ENCODE measurements at regions of chr14 and their contacts with region 1.

Region 1: DNA sequence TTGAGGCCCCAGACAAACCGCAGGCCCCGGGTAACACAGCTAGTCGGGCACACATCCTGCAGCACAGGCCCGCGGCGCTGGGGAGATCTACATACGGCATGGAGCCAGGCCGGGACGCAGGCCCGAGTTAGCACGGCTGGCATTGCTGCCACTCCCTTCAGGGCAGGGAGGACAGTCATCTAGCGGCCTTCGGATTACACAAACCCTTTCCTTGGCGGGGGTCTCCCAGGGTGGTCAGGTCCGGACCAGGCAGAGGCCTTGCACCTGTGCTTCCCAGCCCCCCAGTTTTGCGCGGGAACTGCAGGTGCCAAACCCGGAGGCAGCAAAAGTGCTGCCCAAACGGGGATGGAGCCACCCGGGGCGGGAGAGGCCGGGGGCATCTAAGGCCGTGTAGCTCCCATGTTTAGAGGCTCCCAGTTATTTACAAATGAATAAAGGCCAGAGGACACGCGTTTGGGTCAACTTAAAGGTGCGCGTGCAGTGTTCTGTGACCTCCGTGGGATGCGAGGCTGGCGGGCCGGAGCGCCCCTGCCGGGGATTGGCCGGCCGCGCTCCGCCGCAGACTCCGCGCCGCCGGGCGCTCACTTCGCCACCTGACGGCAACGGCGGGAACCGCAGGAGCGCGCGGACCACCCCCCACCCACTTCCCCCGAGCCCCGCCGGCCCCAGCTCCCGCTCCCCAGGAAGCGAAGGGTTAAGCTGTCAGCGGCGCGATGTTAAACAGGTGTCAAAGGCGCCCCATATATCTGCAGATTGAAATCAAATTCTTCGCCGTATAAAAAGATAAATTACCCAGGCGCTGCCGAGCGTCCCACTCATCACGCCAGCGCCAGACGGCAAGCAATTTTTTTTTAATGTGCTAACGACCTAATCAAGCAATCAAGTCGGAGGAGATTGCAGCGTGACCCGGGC is 18.1 kb downstream of the VSX2 start:
- DNase-seq: no peak
- H3K4me3 ChIP-seq: peak overlapping the region; percentile 37
- H3K27me3 ChIP-seq: peaks cover 21% of the 10 kb centered on the region
- CTCF ChIP-seq: peak; percentile 60

Region 2: DNA sequence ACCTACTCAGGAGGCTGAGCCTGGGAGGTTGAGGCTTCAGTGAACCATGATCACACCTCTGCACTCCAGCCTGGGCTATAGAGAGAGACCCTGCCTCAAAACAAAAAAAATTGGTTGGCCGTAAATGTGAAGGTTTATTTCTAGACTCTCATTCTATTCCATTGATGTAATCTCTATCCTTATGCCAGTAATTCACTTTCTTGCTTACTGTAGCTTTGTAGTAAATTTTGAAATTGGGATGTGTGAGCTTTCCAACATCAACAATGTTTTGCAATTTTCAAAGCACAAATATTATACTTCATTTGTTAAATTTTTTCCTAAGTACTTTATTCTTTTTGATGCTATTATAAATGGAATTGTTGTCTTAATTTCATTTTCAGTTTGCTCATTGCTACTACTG is 148.0 kb before region 1 on chr14:
- CTCF ChIA-PET with region 1: interaction called, 23 read pairs
- POLR2A ChIA-PET with region 1: no interaction called
- DNase-seq: no peak
- H3K4me3 ChIP-seq: no peak overlapping the region
- H3K27me3 ChIP-seq: no peaks in the 10 kb centered on the region
- CTCF ChIP-seq: no peak

Region 3: GRCh38 chr14:74217672-74218448 is 39.5 kb before region 1 on chr14:
- CTCF ChIA-PET with region 1: interaction called, 12 read pairs
- POLR2A ChIA-PET with region 1: no interaction called
- DNase-seq: no peak
- H3K4me3 ChIP-seq: peak overlapping the region; percentile 18; the same call in 1 of the 2 replicates
- H3K27me3 ChIP-seq: peaks cover 29% of the 10 kb centered on the region
- CTCF ChIP-seq: peak; percentile 100

Region 4: GRCh38 chr14:74240794-74241651 is 16.3 kb before region 1 on chr14:
- CTCF ChIA-PET with region 1: interaction called, 16 read pairs
- POLR2A ChIA-PET with region 1: no interaction called
- DNase-seq: no peak
- H3K4me3 ChIP-seq: no peak overlapping the region
- H3K27me3 ChIP-seq: peaks cover 77% of the 10 kb centered on the region
- CTCF ChIP-seq: no peak

Region 5: GRCh38 chr14:74267588-74267987 is 10.3 kb after region 1 on chr14:
- CTCF ChIA-PET with region 1: interaction called, 16 read pairs
- POLR2A ChIA-PET with region 1: no interaction called
- DNase-seq: no peak
- H3K4me3 ChIP-seq: no peak overlapping the region
- H3K27me3 ChIP-seq: peaks cover 3% of the 10 kb centered on the region
- CTCF ChIP-seq: no peak

Region 6: GRCh38 chr14:74275241-74275841 is 18.0 kb after region 1 on chr14:
- CTCF ChIA-PET with region 1: interaction called, 12 read pairs
- POLR2A ChIA-PET with region 1: no interaction called
- DNase-seq: no peak
- H3K4me3 ChIP-seq: no peak overlapping the region
- H3K27me3 ChIP-seq: no peaks in the 10 kb centered on the region
- CTCF ChIP-seq: no peak

Region 7: DNA sequence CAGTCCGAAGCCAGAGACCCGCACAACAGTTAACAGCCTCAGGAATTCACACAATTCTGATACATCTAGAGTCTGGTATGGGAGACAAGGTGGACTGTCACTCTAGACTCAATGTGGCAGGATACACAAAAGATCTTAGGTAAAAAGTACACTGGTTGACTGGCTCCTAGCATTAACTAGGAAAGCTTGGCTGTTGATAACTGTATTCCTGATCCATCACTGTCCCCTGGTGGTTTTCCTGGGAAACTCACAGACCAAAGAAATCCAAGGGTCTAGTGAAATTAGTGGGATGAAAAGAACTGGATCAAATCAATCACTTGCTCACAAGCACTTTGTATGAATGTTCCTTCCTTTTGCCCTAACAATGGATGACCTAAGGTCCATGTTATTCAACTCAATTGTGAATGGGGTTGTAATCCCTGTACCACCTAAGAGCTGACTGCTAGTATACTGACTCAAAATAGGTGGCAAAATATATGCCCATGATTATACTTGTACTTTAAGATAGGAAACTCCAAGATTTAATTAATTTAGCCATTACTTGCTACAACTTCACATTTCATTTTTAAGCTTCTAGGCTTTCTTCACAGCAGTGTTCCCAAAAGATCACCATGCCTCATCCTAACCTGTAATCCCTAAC is 221.8 kb after region 1 on chr14:
- CTCF ChIA-PET with region 1: no interaction called
- POLR2A ChIA-PET with region 1: no interaction called
- DNase-seq: no peak
- H3K4me3 ChIP-seq: no peak overlapping the region
- H3K27me3 ChIP-seq: no peaks in the 10 kb centered on the region
- CTCF ChIP-seq: peak; percentile 80